PC-9 (cell line): ENCODE measurements at regions of chr1 and their contacts with region 1.

Region 1: GRCh38 chr1:161305867-161306519 is 3.8 kb downstream of the MPZ start:
- DNase-seq: no peak
- H3K4me3 ChIP-seq: no peak overlapping the region
- H3K27ac ChIP-seq: no peak overlapping the region
- H3K4me1 ChIP-seq: peaks cover 9% of the 10 kb centered on the region
- H3K27me3 ChIP-seq: no peaks in the 10 kb centered on the region
- CTCF ChIP-seq: no peak

Region 2: DNA sequence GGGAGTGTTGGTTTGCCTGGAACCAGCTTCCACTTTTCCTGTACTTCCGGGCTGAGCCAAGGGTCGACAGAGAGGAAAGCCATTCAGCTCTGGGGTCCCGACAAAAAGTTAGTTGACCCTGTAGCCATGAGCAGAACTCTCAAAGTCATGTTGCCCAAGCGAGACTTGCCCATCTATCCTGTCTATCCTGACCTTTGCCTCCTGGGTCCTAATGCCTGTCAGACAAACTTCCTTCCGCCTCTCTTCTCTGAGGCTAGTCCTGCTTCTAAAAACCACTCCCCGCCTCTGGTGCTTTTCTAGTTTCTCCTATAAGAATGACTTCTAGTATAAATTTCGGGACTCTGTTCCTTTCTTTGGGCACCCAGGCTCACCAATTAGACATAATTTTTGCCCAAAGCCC is 55.2 kb before region 1 on chr1:
- CTCF ChIA-PET with region 1: interaction called, 11 read pairs
- POLR2A ChIA-PET with region 1: no interaction called
- intact Hi-C with region 1: no loop called
- DNase-seq: no peak
- H3K4me3 ChIP-seq: no peak overlapping the region
- H3K27ac ChIP-seq: no peak overlapping the region
- H3K4me1 ChIP-seq: no peaks in the 10 kb centered on the region
- H3K27me3 ChIP-seq: no peaks in the 10 kb centered on the region
- CTCF ChIP-seq: no peak

Region 3: DNA sequence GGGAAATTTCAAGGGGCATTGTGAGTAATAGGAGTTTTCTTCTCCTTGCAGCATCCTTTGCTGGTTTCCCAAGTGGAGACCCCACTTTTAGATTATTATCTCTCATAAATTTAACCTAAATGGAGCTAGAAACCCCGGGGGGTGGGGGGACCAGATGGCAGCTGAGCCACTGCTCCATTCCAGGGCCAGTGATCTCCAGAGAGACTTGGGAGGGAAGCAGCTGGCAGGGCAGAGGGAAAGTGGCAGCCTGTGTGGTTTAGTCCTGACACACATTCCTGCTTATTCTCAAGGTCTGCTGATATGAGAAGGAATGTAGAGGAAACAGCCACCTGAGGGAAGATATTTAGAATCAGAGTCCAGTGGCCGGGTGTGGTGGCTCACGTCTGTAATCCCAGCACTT is 31.1 kb before region 1 on chr1:
- CTCF ChIA-PET with region 1: no interaction called
- POLR2A ChIA-PET with region 1: no interaction called
- intact Hi-C with region 1: no loop called
- DNase-seq: no peak
- H3K4me3 ChIP-seq: no peak overlapping the region
- H3K27ac ChIP-seq: no peak overlapping the region
- H3K4me1 ChIP-seq: no peaks in the 10 kb centered on the region
- H3K27me3 ChIP-seq: peaks cover 7% of the 10 kb centered on the region; the same call in 1 of the 2 replicates
- CTCF ChIP-seq: no peak